SK-N-SH (cell line): ENCODE measurements at regions of chr18 and their contacts with region 1.

Region 1: GRCh38 chr18:26771524-26771923 is 94.0 kb downstream of the AQP4 start:
- DNase-seq: no peak
- H3K4me3 ChIP-seq: no peak overlapping the region
- H3K27ac ChIP-seq: peak overlapping the region in 1 of 2 experiments; percentile 91; a peak in 1 of 4 replicates
- H3K4me1 ChIP-seq: peaks cover 0 to 10% of the 10 kb centered on the region in 2 experiments; a peak in 2 of 4 replicates
- H3K27me3 ChIP-seq: no peaks in the 10 kb centered on the region
- CTCF ChIP-seq: peak; percentile 41
- EP300 ChIP-seq: no peak
- RAD21 ChIP-seq: peak; percentile 70

Region 2: GRCh38 chr18:26656944-26657536 is 114.5 kb before region 1 on chr18:
- CTCF ChIA-PET with region 1: interaction called, 13 read pairs
- POLR2A ChIA-PET with region 1: interaction called, 8 read pairs
- DNase-seq: peak; percentile 80
- H3K4me3 ChIP-seq: peak overlapping the region; percentile 75 to 93
- H3K27ac ChIP-seq: peak overlapping the region in 1 of 2 experiments; percentile 97; a peak in 2 of 4 replicates
- H3K4me1 ChIP-seq: peaks cover 0 to 14% of the 10 kb centered on the region in 2 experiments; a peak in 2 of 4 replicates
- H3K27me3 ChIP-seq: peaks cover 11% of the 10 kb centered on the region; the same call in 1 of the 2 replicates
- CTCF ChIP-seq: peak; percentile 26
- EP300 ChIP-seq: no peak
- RAD21 ChIP-seq: 0 out of 2 replicates have a peak, but pooled peaks have one; percentile 11

Region 3: DNA sequence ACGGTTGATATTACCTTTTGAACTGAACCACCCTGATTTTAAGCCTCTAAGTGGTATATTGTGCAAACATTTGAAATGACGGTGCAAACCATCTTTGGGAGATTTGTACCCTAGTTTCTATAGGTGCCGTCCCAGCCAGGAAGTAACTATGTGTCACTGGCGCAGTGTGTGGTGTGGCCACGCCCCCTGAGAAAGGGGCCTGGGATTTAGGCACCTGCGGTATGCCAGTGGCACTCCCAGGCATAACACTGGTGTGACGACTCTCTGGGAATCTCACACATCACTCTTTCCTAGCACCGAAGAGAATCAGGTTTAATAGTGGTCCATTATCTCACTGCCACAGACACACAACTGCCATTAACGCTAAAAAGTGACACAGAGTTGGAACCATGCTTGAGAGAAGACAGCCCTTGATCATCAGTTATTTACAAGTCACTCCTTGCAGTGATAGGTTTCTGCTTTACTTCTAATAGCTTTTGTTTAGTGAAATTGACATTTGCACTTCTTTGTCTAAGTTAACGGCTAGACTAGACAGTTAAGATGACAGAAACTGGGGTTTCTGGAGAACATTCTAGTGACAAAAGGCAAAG is 82.9 kb after region 1 on chr18:
- CTCF ChIA-PET with region 1: no interaction called
- POLR2A ChIA-PET with region 1: no interaction called
- DNase-seq: no peak
- H3K4me3 ChIP-seq: no peak overlapping the region
- H3K27ac ChIP-seq: no peak overlapping the region
- H3K4me1 ChIP-seq: peaks cover 0 to 2% of the 10 kb centered on the region in 2 experiments; a peak in 1 of 4 replicates
- H3K27me3 ChIP-seq: no peaks in the 10 kb centered on the region
- CTCF ChIP-seq: no peak
- EP300 ChIP-seq: no peak
- RAD21 ChIP-seq: no peak